ENCODE measurements at regions of chr11 and their contacts with region 1.

Region 1: DNA sequence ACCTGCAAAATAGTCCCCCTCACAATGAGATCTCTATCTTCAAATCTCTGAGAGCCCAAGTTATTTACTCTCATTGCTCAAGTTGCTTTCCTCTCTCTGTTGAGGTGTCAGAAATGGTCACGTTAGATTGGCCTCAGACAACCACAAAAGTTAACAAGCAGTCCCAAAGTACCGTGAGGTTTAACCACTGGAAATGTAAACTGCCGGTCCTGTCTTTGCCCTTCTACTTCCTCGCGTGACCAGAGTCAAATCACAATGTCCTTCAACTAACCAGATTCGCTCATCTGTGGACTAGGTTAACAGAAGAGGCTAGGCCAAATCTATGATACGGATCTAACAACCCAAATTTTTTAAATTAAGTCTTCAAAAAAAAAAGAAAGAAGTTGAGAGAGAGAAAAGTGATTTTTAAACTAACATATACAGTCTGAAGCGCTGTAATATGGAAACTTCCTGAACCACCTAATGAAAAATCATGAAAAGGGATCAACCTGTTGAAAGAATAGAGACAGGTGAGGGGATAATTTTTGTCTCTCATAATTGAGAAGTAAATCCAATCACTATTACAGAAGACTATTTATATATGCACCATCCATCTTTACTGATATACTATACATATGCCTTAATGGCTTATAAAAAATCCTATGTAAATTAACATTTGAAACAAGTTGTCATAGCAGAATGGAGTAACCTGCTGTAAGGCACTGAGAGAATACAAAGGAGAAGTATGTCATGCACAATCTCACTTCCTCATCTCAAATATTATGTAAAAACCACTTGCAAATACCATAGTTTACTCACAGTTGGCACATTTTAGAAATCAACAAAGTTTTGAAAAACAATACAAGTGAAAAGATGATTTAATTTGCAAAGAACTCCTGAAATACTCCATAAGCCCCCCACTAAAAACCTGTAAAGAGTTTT is 3.3 kb upstream of the JAML start:
- DNase-seq: peak in 4 of 9 donors; percentile 23 to 49 (median 41)
- ATAC-seq: peak; percentile 34
- H3K4me3 ChIP-seq: peak overlapping the region; percentile 4
- H3K4me3 Mint-ChIP-seq: peak overlapping the region in 9 of 10 donors; percentile 3 to 77 (median 66)
- H3K27ac ChIP-seq: peak overlapping the region; percentile 61
- H3K27ac Mint-ChIP-seq: peak overlapping the region in 1 of 9 donors; percentile 91
- H3K4me1 ChIP-seq: peaks cover 59 to 70% of the 10 kb centered on the region in 2 donors
- H3K4me1 Mint-ChIP-seq: peaks cover 10 to 55% (median 46%) of the 10 kb centered on the region in 7 donors
- H3K27me3 ChIP-seq: no peaks in the 10 kb centered on the region
- H3K27me3 Mint-ChIP-seq: no peaks in the 10 kb centered on the region

Region 2: GRCh38 chr11:118002541-118003423 is 225.3 kb before region 1 on chr11:
- CTCF ChIA-PET with region 1: no interaction called
- POLR2A ChIA-PET with region 1: no interaction called
- intact Hi-C with region 1: loop called in 1 of 2 experiments (anchors 5 kb)
- DNase-seq: peak in 1 of 9 donors; percentile 70
- ATAC-seq: peak; percentile 55
- H3K4me3 ChIP-seq: peak overlapping the region; percentile 23
- H3K4me3 Mint-ChIP-seq: peak overlapping the region; percentile 1 to 82 (median 60)
- H3K27ac ChIP-seq: peak overlapping the region; percentile 58
- H3K27ac Mint-ChIP-seq: peak overlapping the region; percentile 51 to 98 (median 87)
- H3K4me1 ChIP-seq: peaks cover 64 to 96% of the 10 kb centered on the region in 2 donors
- H3K4me1 Mint-ChIP-seq: peaks cover 66 to 97% (median 80%) of the 10 kb centered on the region in 7 donors
- H3K27me3 ChIP-seq: no peaks in the 10 kb centered on the region
- H3K27me3 Mint-ChIP-seq: no peaks in the 10 kb centered on the region

Region 3: GRCh38 chr11:118216621-118217481 is 11.3 kb before region 1 on chr11:
- CTCF ChIA-PET with region 1: interaction called, 25 read pairs
- POLR2A ChIA-PET with region 1: interaction called, 64 read pairs
- intact Hi-C with region 1: loop called (anchors 1 kb)
- DNase-seq: peak in 3 of 9 donors; percentile 19 to 60 (median 39)
- ATAC-seq: peak; percentile 71
- H3K4me3 ChIP-seq: peak overlapping the region; percentile 37
- H3K4me3 Mint-ChIP-seq: peak overlapping the region in 9 of 10 donors; percentile 78 to 87 (median 83)
- H3K27ac ChIP-seq: peak overlapping the region; percentile 64
- H3K27ac Mint-ChIP-seq: peak overlapping the region in 7 of 9 donors; percentile 84 to 96 (median 92)
- H3K4me1 ChIP-seq: peaks cover 62 to 89% of the 10 kb centered on the region in 2 donors
- H3K4me1 Mint-ChIP-seq: peaks cover 75 to 100% (median 98%) of the 10 kb centered on the region in 7 donors
- H3K27me3 ChIP-seq: no peaks in the 10 kb centered on the region
- H3K27me3 Mint-ChIP-seq: no peaks in the 10 kb centered on the region

Region 4: DNA sequence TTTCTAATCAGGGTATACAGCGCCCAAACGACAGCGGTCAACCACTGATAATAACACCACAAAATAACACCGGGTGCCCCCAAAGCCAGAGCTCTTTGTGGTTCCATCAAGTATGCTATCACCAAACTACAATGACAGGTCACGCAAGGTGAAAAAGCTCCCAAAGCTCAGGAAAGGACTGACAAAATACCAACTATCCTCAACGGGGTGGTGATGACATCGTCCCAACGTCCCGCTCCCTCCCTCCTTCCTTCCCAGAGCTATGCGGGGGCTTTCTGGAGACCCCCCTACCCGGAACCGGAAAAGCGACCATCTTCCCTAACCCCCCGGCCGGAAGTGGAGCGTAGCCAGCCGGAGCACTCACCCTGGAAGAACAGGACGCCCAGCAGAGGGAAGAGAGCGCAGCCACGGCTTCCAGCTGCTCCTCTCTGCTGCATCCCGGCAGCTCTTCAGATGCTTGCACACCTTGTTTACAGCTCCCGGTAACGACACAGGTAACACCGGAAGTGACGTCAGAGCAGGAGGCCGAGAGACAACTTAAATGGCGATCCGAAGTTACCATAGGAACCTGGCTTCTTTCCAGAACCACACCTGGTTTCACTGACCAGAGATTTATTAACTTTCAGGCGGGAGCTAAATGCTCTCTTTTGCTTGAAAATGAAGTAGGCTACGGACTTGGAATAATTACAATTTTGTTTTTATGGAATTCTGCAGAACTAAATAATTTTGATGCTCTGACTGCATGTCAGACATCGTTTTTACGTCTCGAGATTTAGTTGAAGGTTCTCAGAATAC is 23.9 kb after region 1 on chr11 and contains the start of gene MPZL3:
- CTCF ChIA-PET with region 1: interaction called, 7 read pairs
- POLR2A ChIA-PET with region 1: interaction called, 75 read pairs
- intact Hi-C with region 1: loop called in 1 of 2 experiments (anchors 1 kb)
- DNase-seq: peak; percentile 68 to 94 (median 87)
- ATAC-seq: peak; percentile 86
- H3K4me3 ChIP-seq: peak within 1 kb of the TSS; percentile 91
- H3K4me3 Mint-ChIP-seq: peak within 1 kb of the TSS; percentile 93 to 99 (median 96)
- H3K27ac ChIP-seq: peak within 1 kb of the TSS; percentile 93
- H3K27ac Mint-ChIP-seq: peak within 1 kb of the TSS; percentile 97 to 100 (median 99)
- H3K4me1 ChIP-seq: peaks cover 10 to 32% of the 10 kb centered on the region in 2 donors
- H3K4me1 Mint-ChIP-seq: peaks cover 16 to 52% (median 39%) of the 10 kb centered on the region in 7 donors
- H3K27me3 ChIP-seq: no peaks in the 10 kb centered on the region
- H3K27me3 Mint-ChIP-seq: no peaks in the 10 kb centered on the region
- total RNA-seq, gene MPZL3: 13.3 to 17.4 (median 17.0) TPM

Region 5: DNA sequence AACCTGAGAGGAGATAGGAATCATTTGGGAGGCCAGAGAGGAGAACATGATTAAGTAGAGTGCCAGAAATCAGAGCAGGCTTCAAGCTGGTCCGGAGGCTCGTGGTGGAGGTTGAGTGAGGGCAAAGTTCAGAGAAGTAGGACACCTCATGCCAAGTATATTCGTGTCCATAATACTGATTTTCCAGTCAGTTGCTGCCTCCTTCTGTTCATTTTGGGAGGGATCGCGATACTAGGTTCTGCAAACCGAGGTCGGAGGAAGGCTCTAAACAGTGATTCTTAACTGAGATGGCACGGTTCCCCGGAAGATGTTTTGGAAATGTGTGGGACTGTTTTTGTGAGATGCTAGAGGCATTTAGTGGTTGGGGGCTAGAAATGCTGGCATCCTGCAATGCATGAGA is 62.8 kb after region 1 on chr11:
- CTCF ChIA-PET with region 1: interaction called, 6 read pairs
- POLR2A ChIA-PET with region 1: interaction called, 6 read pairs
- intact Hi-C with region 1: loop called in 1 of 2 experiments (anchors 2 kb)
- DNase-seq: peak in 8 of 9 donors; percentile 22 to 63 (median 46)
- ATAC-seq: peak; percentile 81
- H3K4me3 ChIP-seq: no peak overlapping the region
- H3K4me3 Mint-ChIP-seq: peak overlapping the region in 2 of 10 donors; percentile 30 to 33
- H3K27ac ChIP-seq: no peak overlapping the region
- H3K27ac Mint-ChIP-seq: peak overlapping the region in 1 of 9 donors; percentile 68
- H3K4me1 ChIP-seq: peaks cover 0 to 11% of the 10 kb centered on the region in 2 donors
- H3K4me1 Mint-ChIP-seq: peaks cover 13 to 19% (median 15%) of the 10 kb centered on the region in 7 donors
- H3K27me3 ChIP-seq: no peaks in the 10 kb centered on the region
- H3K27me3 Mint-ChIP-seq: no peaks in the 10 kb centered on the region

Region 6: DNA sequence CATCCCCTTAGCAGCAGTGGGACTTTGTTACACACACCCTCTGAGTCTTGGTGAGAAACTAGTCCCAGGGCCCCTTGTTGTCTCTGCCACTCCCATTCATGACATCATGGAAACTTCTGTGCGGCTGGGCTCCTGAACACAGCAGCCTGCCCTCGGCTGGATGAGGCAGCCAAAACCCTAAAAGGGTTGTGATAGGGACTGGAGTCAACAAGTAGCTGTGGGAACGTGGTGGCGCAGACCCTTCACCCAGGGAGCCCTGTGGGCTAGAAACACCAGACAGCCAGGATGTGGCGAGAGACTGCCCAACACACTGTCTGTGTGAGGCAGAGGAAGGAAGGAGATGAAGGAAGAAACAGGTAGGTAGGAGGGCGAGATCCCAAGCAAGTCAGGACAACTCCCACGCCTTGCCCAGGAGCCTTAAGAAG is 110.5 kb after region 1 on chr11:
- CTCF ChIA-PET with region 1: interaction called, 3 read pairs
- POLR2A ChIA-PET with region 1: interaction called, 16 read pairs
- intact Hi-C with region 1: no loop called
- DNase-seq: peak; percentile 46 to 99 (median 92)
- ATAC-seq: peak; percentile 82
- H3K4me3 ChIP-seq: peak overlapping the region; percentile 88
- H3K4me3 Mint-ChIP-seq: peak overlapping the region; percentile 89 to 98 (median 96)
- H3K27ac ChIP-seq: peak overlapping the region; percentile 96
- H3K27ac Mint-ChIP-seq: peak overlapping the region; percentile 95 to 100 (median 99)
- H3K4me1 ChIP-seq: peaks cover 46 to 50% of the 10 kb centered on the region in 2 donors
- H3K4me1 Mint-ChIP-seq: peaks cover 28 to 68% (median 55%) of the 10 kb centered on the region in 7 donors
- H3K27me3 ChIP-seq: no peaks in the 10 kb centered on the region
- H3K27me3 Mint-ChIP-seq: no peaks in the 10 kb centered on the region

Region 7: DNA sequence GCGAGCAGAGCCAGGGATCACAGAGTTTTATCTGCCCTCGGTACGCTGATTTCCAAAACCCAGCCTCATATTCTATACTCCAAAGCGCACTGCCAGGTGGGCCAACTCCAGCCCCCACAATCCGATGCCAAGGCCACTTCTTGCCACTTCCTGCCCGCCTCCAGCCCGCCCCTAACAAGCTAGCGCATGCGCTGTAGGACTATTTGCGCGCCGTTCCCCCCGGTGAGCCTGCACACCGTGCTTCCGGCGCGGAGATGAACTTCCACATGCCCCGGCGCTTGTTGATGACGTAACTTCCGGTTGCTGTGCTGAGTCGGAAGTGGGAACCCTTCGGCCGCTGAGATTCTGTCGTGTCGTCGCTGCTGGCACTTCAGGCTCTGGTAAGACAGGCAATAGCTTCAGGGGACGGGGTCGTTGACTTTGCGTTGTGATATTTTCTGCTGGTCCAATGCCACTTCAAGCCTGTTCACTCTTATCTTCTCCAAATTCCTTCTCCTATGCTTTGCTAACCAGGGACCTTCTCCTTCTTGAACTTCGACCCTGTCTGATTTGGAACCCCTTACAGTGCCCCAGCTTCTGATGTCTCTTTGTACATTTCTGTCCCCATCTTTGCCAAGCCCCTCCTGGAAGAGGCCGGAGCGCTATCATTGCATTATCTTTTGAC is 131.3 kb after region 1 on chr11 and contains the start of gene UBE4A:
- CTCF ChIA-PET with region 1: no interaction called
- POLR2A ChIA-PET with region 1: interaction called, 5 read pairs
- intact Hi-C with region 1: loop called in 1 of 2 experiments (anchors 1 kb)
- DNase-seq: peak; percentile 89 to 96 (median 95)
- ATAC-seq: peak; percentile 96
- H3K4me3 ChIP-seq: peak within 1 kb of the TSS; percentile 87
- H3K4me3 Mint-ChIP-seq: peak within 1 kb of the TSS; percentile 92 to 99 (median 96)
- H3K27ac ChIP-seq: peak within 1 kb of the TSS; percentile 93
- H3K27ac Mint-ChIP-seq: peak within 1 kb of the TSS; percentile 96 to 100 (median 98)
- H3K4me1 ChIP-seq: peaks cover 18 to 27% of the 10 kb centered on the region in 2 donors
- H3K4me1 Mint-ChIP-seq: peaks cover 30 to 61% (median 51%) of the 10 kb centered on the region in 7 donors
- H3K27me3 ChIP-seq: no peaks in the 10 kb centered on the region
- H3K27me3 Mint-ChIP-seq: peaks cover 0 to 6% (median 0%) of the 10 kb centered on the region in 5 donors
- total RNA-seq, gene UBE4A: 38.4 to 54.5 (median 46.9) TPM